Head of caudate nucleus (tissue), 42 donors: ENCODE measurements at regions of chr3 and their contacts with region 1.

Region 1: GRCh38 chr3:58013973-58014649 is 5.9 kb downstream of the FLNB start:
- DNase-seq: peak in 10 of 42 donors; percentile 26 to 57 (median 39)

Region 2: GRCh38 chr3:58305882-58306711 is 292.0 kb after region 1 on chr3 and contains the starts of genes HTD2 and RPP14:
- intact Hi-C with region 1: loop called (anchors 10 kb)
- DNase-seq: peak; percentile 93 to 100 (median 98)